Sigmoid colon (tissue), 7 donors: ENCODE measurements at regions of chr18 and their contacts with region 1.

Region 1: GRCh38 chr18:35290073-35290735 is at the start of gene ZSCAN30:
- DNase-seq: peak; percentile 97
- H3K4me3 ChIP-seq: peak within 1 kb of the TSS; percentile 51 to 78 (median 74)
- H3K27ac ChIP-seq: peak within 1 kb of the TSS; percentile 77 to 89 (median 86)
- H3K4me1 ChIP-seq: peaks cover 0 to 33% (median 23%) of the 10 kb centered on the region in 4 donors
- H3K27me3 ChIP-seq: no peaks in the 10 kb centered on the region
- CTCF ChIP-seq: no peak
- EP300 ChIP-seq: peak in 2 of 4 donors; percentile 26 to 36
- POLR2A ChIP-seq: peak; percentile 36 to 55
- total RNA-seq, gene ZSCAN30: 12.5 to 25.8 (median 18.6) TPM

Region 2: DNA sequence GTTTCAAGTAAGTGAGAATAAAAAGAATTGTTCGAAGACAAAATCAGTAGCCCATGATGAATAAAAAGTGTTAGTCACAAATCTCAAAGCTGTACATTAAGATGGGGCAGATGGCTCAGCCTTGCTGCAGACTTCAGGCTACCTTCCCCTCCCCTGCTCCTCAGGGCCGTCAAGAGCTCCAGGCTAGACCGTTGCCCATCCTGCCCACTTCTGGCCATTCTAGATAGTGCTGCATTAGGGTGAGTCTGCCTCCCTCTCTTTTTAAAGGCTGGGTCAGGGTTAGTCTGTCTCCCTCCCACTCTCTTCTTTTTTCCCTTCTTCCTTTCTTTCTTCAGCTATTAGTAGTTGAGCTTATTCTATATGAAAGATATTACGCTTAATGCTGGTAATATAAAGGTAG is 163.0 kb before region 1 on chr18:
- intact Hi-C with region 1: no loop called
- DNase-seq: no peak
- H3K4me3 ChIP-seq: no peak overlapping the region
- H3K27ac ChIP-seq: no peak overlapping the region
- H3K4me1 ChIP-seq: no peaks in the 10 kb centered on the region
- H3K27me3 ChIP-seq: no peaks in the 10 kb centered on the region
- CTCF ChIP-seq: no peak
- EP300 ChIP-seq: no peak
- POLR2A ChIP-seq: no peak

Region 3: DNA sequence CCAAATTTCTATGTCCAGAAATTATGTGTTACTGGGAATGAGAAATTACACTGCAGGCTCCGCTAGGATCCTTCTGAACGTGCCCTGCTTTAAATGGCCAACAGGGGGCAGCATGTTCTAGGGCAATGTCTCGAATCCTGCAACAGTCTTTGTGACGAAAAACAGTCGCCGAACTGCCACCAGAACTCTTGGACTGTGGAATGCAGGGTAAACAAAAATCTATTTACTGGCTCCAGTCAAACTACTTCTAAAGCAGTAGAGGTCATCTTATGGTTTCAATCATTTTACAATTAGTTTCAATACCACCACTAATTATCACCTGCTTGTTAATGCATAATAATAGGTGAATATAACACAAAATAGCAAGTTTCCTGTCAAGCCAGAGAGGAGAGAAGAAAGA is 59.2 kb before region 1 on chr18:
- intact Hi-C with region 1: loop called (anchors 2 kb)
- DNase-seq: peak; percentile 87
- H3K4me3 ChIP-seq: peak overlapping the region in 1 of 4 donors; percentile 1
- H3K27ac ChIP-seq: no peak overlapping the region
- H3K4me1 ChIP-seq: peaks cover 0 to 9% (median 2%) of the 10 kb centered on the region in 4 donors
- H3K27me3 ChIP-seq: no peaks in the 10 kb centered on the region
- CTCF ChIP-seq: peak; percentile 61 to 95 (median 84)
- EP300 ChIP-seq: no peak
- POLR2A ChIP-seq: no peak

Region 4: DNA sequence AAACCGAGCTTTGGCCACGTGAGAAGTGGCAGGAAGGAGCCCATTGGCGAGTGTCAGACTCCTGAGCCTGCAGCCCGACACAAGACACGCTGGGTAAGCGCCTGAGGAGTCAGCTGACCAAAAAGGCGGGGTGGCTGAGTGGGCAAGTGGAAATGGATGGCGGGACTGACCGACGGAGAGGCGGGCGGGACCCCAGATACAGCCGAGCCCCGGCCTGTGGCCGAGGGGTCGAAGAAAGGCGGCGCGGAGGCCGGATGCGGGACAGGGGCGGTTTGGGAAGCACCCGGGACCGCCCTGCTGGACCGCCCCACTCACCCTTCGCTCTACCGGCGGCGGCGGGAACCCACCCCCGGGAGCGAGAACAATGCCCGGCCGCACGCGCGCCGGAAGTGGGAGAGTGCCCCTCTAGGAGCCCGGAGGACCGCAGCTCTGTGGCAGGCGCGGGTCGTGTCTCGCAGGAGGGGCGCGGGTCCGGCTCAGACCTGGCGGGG is 23.0 kb before region 1 on chr18:
- intact Hi-C with region 1: loop called (anchors 1 kb)
- DNase-seq: peak; percentile 93
- H3K4me3 ChIP-seq: peak overlapping the region; percentile 66 to 75 (median 72)
- H3K27ac ChIP-seq: peak overlapping the region; percentile 85 to 89 (median 87)
- H3K4me1 ChIP-seq: peaks cover 0 to 6% (median 5%) of the 10 kb centered on the region in 4 donors
- H3K27me3 ChIP-seq: no peaks in the 10 kb centered on the region
- CTCF ChIP-seq: no peak
- EP300 ChIP-seq: peak in 1 of 4 donors; percentile 6
- POLR2A ChIP-seq: peak; percentile 8 to 16

Region 5: DNA sequence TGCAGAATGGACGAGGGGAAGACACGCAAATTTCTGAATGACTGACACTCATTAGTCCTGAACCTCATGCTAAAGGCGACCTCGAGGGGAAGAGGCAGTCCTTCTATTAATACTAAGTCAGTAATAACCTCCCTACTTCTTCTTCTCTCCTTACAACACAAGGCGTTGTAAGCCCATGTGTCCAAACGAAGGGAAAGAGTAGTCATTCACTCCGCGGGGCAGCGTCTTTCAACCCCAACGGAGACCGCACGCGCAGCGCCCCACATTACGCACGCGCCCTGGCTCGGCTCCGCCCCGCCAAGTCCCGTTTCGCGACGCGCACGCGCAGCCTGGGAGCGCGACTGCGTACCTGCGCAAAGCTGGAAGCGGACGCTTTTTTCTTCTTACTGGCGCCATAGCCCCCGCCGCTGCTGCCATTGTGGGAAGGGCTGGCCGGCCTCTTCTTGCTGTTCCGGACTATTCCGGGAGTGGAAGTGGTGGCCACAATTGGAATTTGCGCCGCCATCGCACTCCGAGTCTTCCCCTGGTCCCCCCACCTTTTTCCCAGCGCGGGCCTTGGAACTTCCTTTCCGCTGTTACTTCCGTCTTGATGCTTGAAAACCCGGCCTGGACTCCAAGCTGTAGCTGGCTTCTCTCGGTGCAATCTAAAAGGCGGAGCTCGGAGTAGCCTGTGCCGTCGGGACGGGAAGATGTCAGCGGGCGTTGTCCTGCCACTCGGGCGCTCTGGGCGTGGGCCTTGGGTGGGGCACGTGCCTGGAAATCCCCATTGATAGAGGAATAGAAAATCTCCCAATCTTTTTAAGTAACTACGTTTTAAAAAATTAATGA is 207.4 kb after region 1 on chr18 and contains the start of gene INO80C:
- intact Hi-C with region 1: loop called (anchors 5 kb)
- DNase-seq: peak; percentile 95
- H3K4me3 ChIP-seq: peak within 1 kb of the TSS; percentile 55 to 74 (median 63)
- H3K27ac ChIP-seq: peak within 1 kb of the TSS; percentile 87 to 95 (median 92)
- H3K4me1 ChIP-seq: peaks cover 4 to 39% (median 19%) of the 10 kb centered on the region in 4 donors
- H3K27me3 ChIP-seq: no peaks in the 10 kb centered on the region
- CTCF ChIP-seq: no peak
- EP300 ChIP-seq: no peak
- POLR2A ChIP-seq: peak; percentile 61 to 90
- total RNA-seq, gene INO80C: 3.7 to 25.5 (median 5.2) TPM

Region 6: DNA sequence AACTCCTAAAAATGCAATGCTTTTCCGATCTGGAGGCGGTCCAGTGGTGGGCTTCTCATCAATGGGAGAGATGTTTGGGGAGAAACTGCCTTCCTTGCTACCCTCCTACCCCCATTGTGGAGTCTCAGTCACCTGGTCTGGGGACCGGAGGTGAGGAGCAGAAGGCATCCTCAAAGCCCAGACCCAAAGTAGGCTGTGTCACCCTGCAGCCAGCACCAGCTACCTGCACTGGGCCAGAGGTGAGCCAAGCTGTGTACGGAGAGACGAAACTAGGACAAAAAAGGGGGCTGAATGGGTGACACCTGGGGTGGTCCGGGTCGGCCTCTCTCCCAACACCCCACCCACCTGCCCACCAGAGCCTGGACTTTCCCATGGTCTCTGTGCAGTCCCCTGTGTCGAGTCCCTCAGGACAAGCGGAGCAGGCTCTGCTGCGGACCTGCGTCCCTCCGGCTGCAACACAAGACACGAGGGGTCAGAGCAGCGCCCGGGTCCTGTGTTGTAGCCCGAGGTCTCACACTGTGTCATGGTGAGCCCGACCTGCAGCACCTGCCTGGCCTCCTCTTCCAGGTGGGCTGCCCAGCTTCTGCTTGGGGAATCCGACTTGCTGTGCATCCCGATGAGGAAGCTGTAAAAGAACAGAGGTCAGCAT is 614.3 kb after region 1 on chr18:
- intact Hi-C with region 1: no loop called
- DNase-seq: no peak
- H3K4me3 ChIP-seq: no peak overlapping the region
- H3K27ac ChIP-seq: no peak overlapping the region
- H3K4me1 ChIP-seq: no peaks in the 10 kb centered on the region
- H3K27me3 ChIP-seq: no peaks in the 10 kb centered on the region
- CTCF ChIP-seq: no peak
- EP300 ChIP-seq: no peak
- POLR2A ChIP-seq: no peak